GM10248 (cell line): ENCODE measurements at regions of chr2 and their contacts with region 1.

Region 1: GRCh38 chr2:62415019-62415431 is 91.0 kb downstream of the TMEM17 start:
- DNase-seq: peak; percentile 65
- CTCF ChIP-seq: no peak

Region 2: DNA sequence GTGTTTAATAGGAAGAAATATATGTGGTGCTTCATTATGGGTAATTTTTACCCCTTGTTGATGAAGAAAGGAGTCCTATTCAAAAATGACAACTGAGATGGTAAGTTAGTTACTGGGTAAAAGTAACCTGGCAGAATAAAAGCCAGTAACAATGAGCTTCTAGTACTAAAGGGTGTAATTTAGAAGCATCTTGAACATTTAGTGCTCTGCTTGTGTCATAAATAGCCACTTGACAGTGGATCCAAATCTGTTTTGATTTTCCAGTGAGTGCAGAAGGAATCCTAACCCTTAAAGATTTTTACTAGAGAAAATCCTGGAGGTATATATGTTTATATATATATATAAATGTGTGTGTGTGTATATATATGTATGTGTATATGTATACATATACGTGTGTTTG is 494.5 kb before region 1 on chr2:
- CTCF ChIA-PET with region 1: interaction called, 10 read pairs
- POLR2A ChIA-PET with region 1: no interaction called
- DNase-seq: no peak
- CTCF ChIP-seq: no peak

Region 3: DNA sequence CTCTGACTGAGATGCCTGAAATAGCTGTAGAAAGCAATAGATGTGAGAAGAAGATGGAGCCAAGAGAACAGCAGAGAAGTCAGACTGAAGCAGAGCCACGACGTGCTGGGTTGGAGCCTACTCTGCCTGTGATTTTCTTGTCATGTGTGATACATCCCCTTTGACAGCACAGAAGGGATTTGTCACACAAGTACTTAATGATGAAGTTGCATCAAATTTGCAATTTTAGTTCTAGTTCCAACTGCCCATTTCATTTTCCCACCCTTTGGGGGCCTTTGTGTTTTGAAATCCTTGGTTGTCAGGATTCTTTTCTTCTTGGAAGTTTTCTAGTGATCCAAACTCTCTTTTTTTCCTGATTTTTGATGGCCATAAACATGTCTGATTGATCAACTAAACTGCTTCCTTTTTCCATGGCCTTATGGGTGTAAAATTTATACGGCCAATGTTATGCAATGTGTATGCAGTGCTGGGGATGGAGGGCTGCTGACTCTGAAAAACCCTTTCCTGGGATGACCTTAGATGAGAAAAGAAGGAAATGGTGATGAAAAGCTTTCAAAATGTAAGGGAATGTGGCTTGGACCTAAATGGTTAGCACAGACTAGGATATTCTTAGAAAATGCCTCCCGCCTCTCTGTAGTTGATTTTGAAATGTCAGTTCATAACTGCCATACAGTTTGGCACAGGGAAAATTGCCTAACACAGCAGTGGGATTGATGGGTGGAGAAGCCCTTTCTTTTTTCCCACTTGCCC is 228.7 kb before region 1 on chr2:
- CTCF ChIA-PET with region 1: no interaction called
- POLR2A ChIA-PET with region 1: no interaction called
- DNase-seq: no peak
- CTCF ChIP-seq: no peak